Activated T-helper 2 cell treated with anti-CD3 and anti-CD28 coated beads, Interferon-gamma antibody, Interleukin-2, Interleukin-4, amounts not matched to agents 10 μg/mL and 5 μg/mL and 100 μg/mL, durations not matched to agents 14 hours and 24 hours and 36 hours (primary cell): ENCODE measurements at regions of chr1 and their contacts with region 1.

Region 1: DNA sequence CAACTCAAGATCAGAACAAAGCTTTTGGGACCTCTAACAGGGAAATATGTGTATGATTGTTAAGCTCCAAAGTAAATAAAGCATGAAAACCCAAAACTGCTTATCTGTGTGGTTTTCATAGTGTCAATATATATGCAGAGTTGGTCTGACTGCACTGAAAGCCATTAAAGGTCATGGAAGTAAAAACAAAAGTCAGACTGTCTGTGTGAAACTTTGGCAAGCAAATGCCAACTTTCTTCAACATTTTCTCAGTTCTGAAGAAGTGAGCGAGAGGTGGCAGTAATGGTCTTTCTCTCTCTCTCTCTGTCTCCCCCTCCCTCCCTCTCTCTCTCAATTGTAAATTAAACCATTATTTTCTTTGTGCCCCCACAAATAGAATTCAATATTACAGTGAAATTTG is 100.1 kb upstream of the S1PR1 start:
- DNase-seq: no peak
- H3K4me3 Mint-ChIP-seq: peak overlapping the region; percentile 47
- H3K27ac Mint-ChIP-seq: peak overlapping the region; percentile 89
- H3K4me1 Mint-ChIP-seq: peaks cover 67% of the 10 kb centered on the region
- H3K27me3 Mint-ChIP-seq: no peaks in the 10 kb centered on the region

Region 2: DNA sequence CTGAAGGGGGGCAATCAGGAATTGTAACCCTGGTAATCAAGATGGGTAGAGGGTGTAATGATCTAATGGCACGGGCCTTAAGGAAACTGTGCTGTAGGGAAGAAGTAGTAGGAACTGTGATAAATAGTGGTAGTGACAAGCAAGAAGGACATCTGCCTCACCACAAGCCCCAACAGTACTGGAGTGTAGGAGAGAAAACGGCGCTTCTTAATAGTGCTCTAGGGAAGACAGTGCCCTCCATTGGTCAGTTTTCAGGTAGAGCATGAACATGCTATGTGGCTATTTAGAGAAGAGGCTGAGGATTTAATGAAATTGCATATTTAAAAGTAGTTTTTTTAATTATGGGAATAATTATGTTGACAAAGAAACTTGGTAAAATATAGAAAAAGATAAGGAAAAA is 208.6 kb before region 1 on chr1:
- intact Hi-C with region 1: loop called (anchors 5 kb)
- DNase-seq: no peak
- H3K4me3 Mint-ChIP-seq: no peak overlapping the region
- H3K27ac Mint-ChIP-seq: no peak overlapping the region
- H3K4me1 Mint-ChIP-seq: peaks cover 49% of the 10 kb centered on the region
- H3K27me3 Mint-ChIP-seq: no peaks in the 10 kb centered on the region

Region 3: DNA sequence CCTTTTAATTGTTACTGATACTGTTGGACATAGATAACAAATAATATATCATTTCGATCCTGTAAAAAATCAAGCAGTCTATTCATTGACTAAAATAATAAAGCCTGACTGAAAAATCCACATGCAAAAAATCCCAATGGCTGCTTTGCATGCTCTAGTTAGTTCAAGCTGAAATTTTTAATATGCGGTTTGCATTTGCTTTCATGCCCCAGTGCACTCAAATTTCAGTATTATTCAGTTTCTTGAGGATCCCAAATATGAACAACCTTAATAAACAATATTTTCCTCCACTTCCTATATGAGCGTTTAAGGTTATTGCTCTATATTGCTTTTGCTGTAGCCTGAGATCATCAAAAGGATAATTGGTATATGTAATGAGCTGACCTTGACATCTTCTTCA is 36.1 kb before region 1 on chr1:
- intact Hi-C with region 1: no loop called
- DNase-seq: no peak
- H3K4me3 Mint-ChIP-seq: no peak overlapping the region
- H3K27ac Mint-ChIP-seq: no peak overlapping the region
- H3K4me1 Mint-ChIP-seq: peaks cover 13% of the 10 kb centered on the region
- H3K27me3 Mint-ChIP-seq: no peaks in the 10 kb centered on the region

Region 4: GRCh38 chr1:101153692-101154091 is 17.0 kb after region 1 on chr1:
- intact Hi-C with region 1: loop called (anchors 1 kb)
- DNase-seq: no peak
- H3K4me3 Mint-ChIP-seq: no peak overlapping the region
- H3K27ac Mint-ChIP-seq: peak overlapping the region; percentile 36
- H3K4me1 Mint-ChIP-seq: peaks cover 44% of the 10 kb centered on the region
- H3K27me3 Mint-ChIP-seq: no peaks in the 10 kb centered on the region

Region 5: GRCh38 chr1:101170506-101171050 is 33.8 kb after region 1 on chr1:
- intact Hi-C with region 1: no loop called
- DNase-seq: no peak
- H3K4me3 Mint-ChIP-seq: no peak overlapping the region
- H3K27ac Mint-ChIP-seq: no peak overlapping the region
- H3K4me1 Mint-ChIP-seq: peaks cover 49% of the 10 kb centered on the region
- H3K27me3 Mint-ChIP-seq: no peaks in the 10 kb centered on the region

Region 6: GRCh38 chr1:101198842-101199636 is 62.3 kb after region 1 on chr1:
- intact Hi-C with region 1: loop called (anchors 1 kb)
- DNase-seq: peak; percentile 51
- H3K4me3 Mint-ChIP-seq: peak overlapping the region; percentile 7
- H3K27ac Mint-ChIP-seq: peak overlapping the region; percentile 85
- H3K4me1 Mint-ChIP-seq: peaks cover 40% of the 10 kb centered on the region
- H3K27me3 Mint-ChIP-seq: no peaks in the 10 kb centered on the region

Region 7: GRCh38 chr1:101357444-101357986 is 220.8 kb after region 1 on chr1:
- intact Hi-C with region 1: loop called (anchors 2 kb)
- DNase-seq: peak; percentile 66
- H3K4me3 Mint-ChIP-seq: no peak overlapping the region
- H3K27ac Mint-ChIP-seq: no peak overlapping the region
- H3K4me1 Mint-ChIP-seq: peaks cover 13% of the 10 kb centered on the region
- H3K27me3 Mint-ChIP-seq: peaks cover 52% of the 10 kb centered on the region